ENCODE measurements at regions of chr2 and their contacts with region 1.

Region 1: GRCh38 chr2:207334624-207335371 is 169.1 kb upstream of the KLF7 start:
- DNase-seq: peak; percentile 99
- H3K4me3 ChIP-seq: peak overlapping the region in 1 of 3 experiments; percentile 60
- H3K27ac ChIP-seq: peak overlapping the region; percentile 99
- H3K4me1 ChIP-seq: peaks cover 53% of the 10 kb centered on the region
- H3K27me3 ChIP-seq: no peaks in the 10 kb centered on the region
- CTCF ChIP-seq: no peak
- POLR2A ChIP-seq: peak; percentile 24

Region 2: GRCh38 chr2:206981739-206982340 is 353.0 kb before region 1 on chr2:
- CTCF ChIA-PET with region 1: no interaction called
- POLR2A ChIA-PET with region 1: no interaction called
- dilution Hi-C with region 1: no loop called
- intact Hi-C with region 1: loop called (anchors 5 kb)
- DNase-seq: peak; percentile 79
- H3K4me3 ChIP-seq: no peak overlapping the region
- H3K27ac ChIP-seq: no peak overlapping the region
- H3K4me1 ChIP-seq: no peaks in the 10 kb centered on the region
- H3K27me3 ChIP-seq: peaks cover 0 to 5% of the 10 kb centered on the region in 2 experiments
- CTCF ChIP-seq: peak; percentile 83 to 88
- POLR2A ChIP-seq: no peak

Region 3: DNA sequence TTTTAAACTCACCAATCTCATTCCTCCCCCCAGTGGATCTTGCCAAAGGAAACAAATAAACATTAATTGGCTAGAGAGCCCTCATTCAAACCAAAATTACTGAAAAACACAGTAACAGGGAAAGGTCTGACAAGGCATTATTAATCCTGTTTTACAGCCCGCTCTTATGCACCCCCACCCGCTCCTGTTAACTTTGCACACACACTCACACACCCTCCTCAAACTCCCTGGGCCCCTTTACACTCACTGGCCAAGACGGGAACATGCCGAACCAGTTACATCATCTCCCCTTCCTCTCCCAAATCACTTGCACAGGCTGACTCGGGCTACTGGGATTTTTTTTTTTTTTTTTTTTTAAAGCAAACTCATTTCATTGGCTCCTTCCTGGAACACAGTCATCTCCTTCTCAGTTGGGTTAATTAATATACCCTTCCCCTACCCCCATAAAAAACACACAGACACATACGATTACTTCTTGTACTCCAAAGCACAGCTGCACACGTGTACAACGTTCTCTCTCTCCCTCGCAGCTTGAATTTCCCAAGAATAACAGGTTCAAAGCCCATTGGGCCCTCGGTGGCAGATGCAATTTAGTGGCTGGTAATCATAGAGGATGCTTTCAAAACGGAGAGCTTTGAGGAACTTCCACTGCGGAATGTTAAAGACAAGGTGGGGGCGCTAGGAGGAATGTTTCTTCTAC is 200.8 kb before region 1 on chr2:
- CTCF ChIA-PET with region 1: interaction called, 3 read pairs
- POLR2A ChIA-PET with region 1: no interaction called
- dilution Hi-C with region 1: no loop called
- intact Hi-C with region 1: loop called (anchors 1 kb)
- DNase-seq: peak; percentile 86
- H3K4me3 ChIP-seq: peak overlapping the region in 1 of 3 experiments; percentile 42
- H3K27ac ChIP-seq: peak overlapping the region; percentile 94
- H3K4me1 ChIP-seq: peaks cover 83% of the 10 kb centered on the region
- H3K27me3 ChIP-seq: no peaks in the 10 kb centered on the region
- CTCF ChIP-seq: no peak
- POLR2A ChIP-seq: peak; percentile 42

Region 4: DNA sequence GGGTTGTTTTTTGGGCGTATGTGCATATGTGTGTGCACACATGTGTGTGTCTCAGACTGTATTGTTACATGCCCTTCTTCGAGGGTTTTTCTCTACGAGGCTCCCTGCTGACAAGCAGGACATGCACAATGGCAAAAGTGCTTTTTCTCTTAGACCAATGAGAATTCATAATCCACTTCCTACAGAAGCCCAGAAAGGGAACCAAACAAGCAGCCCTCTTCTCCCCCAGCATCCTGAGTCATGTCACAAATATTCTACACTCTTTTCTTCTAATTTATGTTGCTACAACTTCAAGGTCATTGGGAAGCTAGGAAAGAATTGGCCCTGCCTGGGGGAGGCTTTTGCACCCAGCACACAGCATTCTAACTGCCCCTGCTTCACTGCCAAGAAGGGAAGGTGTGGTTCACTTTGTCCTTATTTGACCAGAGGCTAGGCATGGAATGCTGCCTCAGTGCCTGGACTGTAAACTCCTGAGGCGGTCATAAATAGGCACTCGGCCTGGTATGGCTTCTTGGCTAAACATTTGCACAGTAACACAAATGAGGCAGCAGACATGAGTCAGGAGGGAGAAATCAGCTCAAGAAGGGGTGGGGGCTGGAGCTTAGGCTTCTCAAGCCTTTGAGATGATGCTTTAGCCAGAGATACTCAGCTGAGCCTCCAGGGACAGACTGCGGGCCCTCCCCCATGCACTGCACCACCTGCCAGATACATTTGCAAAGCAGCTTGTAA is 76.4 kb before region 1 on chr2:
- CTCF ChIA-PET with region 1: interaction called, 4 read pairs
- POLR2A ChIA-PET with region 1: no interaction called
- dilution Hi-C with region 1: no loop called
- intact Hi-C with region 1: loop called (anchors 1 kb)
- DNase-seq: peak; percentile 90
- H3K4me3 ChIP-seq: no peak overlapping the region
- H3K27ac ChIP-seq: peak overlapping the region; percentile 38
- H3K4me1 ChIP-seq: peaks cover 35% of the 10 kb centered on the region
- H3K27me3 ChIP-seq: no peaks in the 10 kb centered on the region
- CTCF ChIP-seq: no peak
- POLR2A ChIP-seq: no peak

Region 5: GRCh38 chr2:207311316-207312005 is 23.3 kb before region 1 on chr2:
- CTCF ChIA-PET with region 1: no interaction called
- POLR2A ChIA-PET with region 1: no interaction called
- dilution Hi-C with region 1: no loop called
- intact Hi-C with region 1: loop called (anchors 1 kb)
- DNase-seq: peak; percentile 88
- H3K4me3 ChIP-seq: no peak overlapping the region
- H3K27ac ChIP-seq: peak overlapping the region; percentile 25
- H3K4me1 ChIP-seq: peaks cover 11% of the 10 kb centered on the region
- H3K27me3 ChIP-seq: no peaks in the 10 kb centered on the region
- CTCF ChIP-seq: peak; percentile 10 to 24
- POLR2A ChIP-seq: no peak

Region 6: DNA sequence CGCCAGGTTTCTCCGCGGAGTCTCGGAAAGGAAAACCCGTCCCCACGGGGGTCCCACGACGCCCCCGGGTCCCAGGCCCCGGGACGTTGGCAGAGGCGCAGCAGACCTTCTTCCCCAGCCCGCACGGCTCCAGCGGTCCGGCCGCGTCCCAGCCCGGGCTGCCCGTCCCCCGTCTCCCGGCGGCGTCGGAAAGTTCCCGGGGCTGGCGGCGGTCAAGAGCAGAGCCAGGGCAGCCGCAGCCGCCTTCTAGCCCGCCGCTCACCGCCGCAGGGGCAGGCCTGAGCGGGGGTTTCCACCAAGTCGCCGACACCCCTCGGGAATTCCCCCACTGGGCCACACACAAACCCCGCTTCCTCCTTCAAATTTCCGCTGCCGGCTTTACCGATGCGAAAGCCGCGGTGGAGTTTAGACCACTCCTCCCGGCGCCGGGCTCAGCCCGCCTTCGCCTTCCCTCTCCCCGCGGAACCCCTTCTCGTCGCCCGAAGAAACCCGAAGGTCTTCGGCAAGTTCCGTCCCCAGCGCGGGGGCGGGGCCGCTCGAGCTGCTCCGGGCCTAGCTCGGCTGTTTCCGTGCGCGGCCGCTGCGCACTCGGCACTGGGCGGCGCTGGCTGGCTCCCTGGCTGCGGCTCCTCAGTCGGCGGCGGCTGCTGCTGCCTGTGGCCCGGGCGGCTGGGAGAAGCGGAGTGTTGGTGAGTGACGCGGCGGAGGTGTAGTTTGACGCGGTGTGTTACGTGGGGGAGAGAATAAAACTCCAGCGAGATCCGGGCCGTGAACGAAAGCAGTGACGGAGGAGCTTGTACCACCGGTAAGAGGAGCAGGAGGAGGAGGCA is 194.7 kb after region 1 on chr2 and contains the start of gene CREB1:
- CTCF ChIA-PET with region 1: no interaction called
- POLR2A ChIA-PET with region 1: interaction called, 4 read pairs
- dilution Hi-C with region 1: no loop called
- intact Hi-C with region 1: loop called (anchors 1 kb)
- DNase-seq: peak; percentile 99
- H3K4me3 ChIP-seq: peak within 1 kb of the TSS; percentile 79 to 98 (median 91)
- H3K27ac ChIP-seq: peak within 1 kb of the TSS; percentile 95
- H3K4me1 ChIP-seq: peaks cover 28% of the 10 kb centered on the region
- H3K27me3 ChIP-seq: no peaks in the 10 kb centered on the region
- CTCF ChIP-seq: no peak
- POLR2A ChIP-seq: no peak
- total RNA-seq, gene CREB1: 69.3 and 71.1 TPM in 2 replicates

Measured in endothelial cell of umbilical vein (primary cell).